Ascending aorta (tissue), 2 donors: ENCODE measurements at regions of chr4 and their contacts with region 1.

Region 1: DNA sequence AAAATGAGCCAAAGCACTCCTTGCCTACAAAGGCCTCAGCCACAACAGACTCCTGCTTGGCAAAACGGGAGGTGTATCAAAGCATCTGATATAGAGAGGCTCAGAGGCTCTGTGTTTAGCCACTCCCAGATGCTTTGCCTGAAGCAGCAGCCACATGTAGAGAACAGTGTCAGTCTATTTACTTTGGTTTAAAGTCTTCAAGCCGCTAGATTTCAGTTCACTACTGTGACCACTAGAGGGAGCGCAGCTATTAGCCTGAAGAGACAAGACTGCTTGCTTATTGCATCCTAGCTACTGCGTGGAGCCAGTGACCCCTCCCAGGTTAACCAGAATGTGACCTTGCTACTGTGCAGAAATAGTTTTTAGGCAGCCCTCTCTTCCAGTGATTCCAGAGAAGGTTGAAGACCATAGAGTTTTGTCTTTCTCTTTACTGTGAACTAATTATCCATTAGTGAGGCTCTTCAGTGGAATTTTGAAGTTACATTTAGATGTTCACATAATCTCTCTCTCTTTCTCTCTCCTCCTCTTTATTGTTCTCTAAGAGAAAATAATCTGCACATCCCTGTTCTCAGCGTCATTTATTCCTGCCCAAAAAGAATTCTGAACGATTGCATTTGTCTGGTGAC is 39.3 kb downstream of the BMP3 start:
- DNase-seq: peak in 1 of 2 donors; percentile 78
- H3K4me3 ChIP-seq: no peak overlapping the region
- H3K27ac ChIP-seq: no peak overlapping the region
- H3K4me1 ChIP-seq: no peaks in the 10 kb centered on the region
- H3K27me3 ChIP-seq: no peaks in the 10 kb centered on the region
- CTCF ChIP-seq: peak; percentile 50 to 90 (median 82)

Region 2: GRCh38 chr4:81351654-81352445 is 282.0 kb after region 1 on chr4:
- intact Hi-C with region 1: loop called (anchors 1 kb)
- DNase-seq: peak in 1 of 2 donors; percentile 79
- H3K4me3 ChIP-seq: peak overlapping the region in 1 of 2 donors; percentile 22
- H3K27ac ChIP-seq: no peak overlapping the region
- H3K4me1 ChIP-seq: no peaks in the 10 kb centered on the region
- H3K27me3 ChIP-seq: no peaks in the 10 kb centered on the region
- CTCF ChIP-seq: peak; percentile 41 to 90 (median 84)